ENCODE measurements at regions of chr5 and their contacts with region 1.

Region 1: GRCh38 chr5:97231025-97231636 is 48.1 kb upstream of the RIOK2 start:
- DNase-seq: peak; percentile 65
- H3K4me3 ChIP-seq: no peak overlapping the region
- H3K27ac ChIP-seq: no peak overlapping the region
- H3K4me1 ChIP-seq: no peaks in the 10 kb centered on the region
- CTCF ChIP-seq: peak; percentile 97

Region 2: GRCh38 chr5:97436405-97436804 is 205.3 kb after region 1 on chr5:
- CTCF ChIA-PET with region 1: no interaction called
- POLR2A ChIA-PET with region 1: no interaction called
- intact Hi-C with region 1: loop called (anchors 5 kb)
- DNase-seq: no peak
- H3K4me3 ChIP-seq: no peak overlapping the region
- H3K27ac ChIP-seq: no peak overlapping the region
- H3K4me1 ChIP-seq: no peaks in the 10 kb centered on the region
- CTCF ChIP-seq: no peak

Region 3: DNA sequence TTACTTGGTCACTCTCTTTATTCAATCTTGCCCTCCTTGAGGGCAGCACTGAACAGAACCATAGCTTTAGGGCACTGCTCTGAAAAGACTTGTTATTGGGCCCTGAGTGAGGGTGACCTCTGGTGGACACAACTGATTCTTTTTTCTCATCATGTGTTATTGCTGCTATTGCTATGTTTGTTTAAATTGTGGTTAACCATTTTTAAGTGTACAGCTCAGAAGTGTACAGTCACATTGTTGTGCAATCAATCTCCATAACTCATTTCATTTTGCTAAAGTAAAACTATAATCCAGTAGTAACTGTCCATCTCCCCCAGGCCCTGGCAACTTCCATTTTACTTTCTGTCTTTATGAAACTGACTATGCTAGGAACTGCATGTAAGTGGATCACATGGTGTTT is 303.0 kb after region 1 on chr5:
- CTCF ChIA-PET with region 1: no interaction called
- POLR2A ChIA-PET with region 1: no interaction called
- intact Hi-C with region 1: loop called (anchors 5 kb)
- DNase-seq: peak; percentile 31
- H3K4me3 ChIP-seq: no peak overlapping the region
- H3K27ac ChIP-seq: no peak overlapping the region
- H3K4me1 ChIP-seq: no peaks in the 10 kb centered on the region
- CTCF ChIP-seq: peak; percentile 79